Activated CD4-positive, alpha-beta memory T cell treated with anti-CD3 and anti-CD28 coated beads for 36 hours (primary cell): ENCODE measurements at regions of chr4 and their contacts with region 1.

Region 1: DNA sequence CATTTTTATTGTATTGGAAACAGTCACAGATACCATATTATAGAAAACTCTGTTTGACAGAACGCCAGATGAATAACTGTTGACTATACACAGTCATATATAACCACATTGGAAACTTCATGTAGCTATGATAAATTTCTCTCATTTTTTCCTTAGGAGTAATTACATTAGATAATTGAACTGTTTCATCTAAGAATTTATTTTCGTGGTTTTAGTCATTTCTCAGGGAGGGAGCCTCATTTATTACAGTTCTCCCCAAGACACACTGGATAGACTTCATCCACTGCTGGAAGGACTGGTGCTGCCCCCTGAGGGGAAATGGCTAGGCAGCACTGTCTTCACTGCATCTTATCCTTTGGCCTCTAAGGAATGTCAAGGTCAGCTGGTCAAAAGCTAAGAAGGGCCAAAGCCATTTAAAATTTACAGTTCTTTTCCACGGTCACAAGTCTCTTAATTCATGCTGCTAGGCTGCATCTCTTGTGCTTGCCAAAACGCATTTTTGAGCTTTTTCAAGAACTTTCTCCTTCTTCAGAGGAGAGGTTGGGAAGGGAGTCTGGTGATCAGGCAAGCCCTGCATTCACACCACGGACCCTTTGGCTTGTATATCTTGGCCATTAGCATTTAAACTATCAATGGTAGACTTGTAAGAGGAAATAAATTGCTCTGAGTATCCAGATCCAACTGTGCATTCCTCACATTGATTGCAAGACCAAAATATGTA is 145.1 kb downstream of the CBR4 start:
- DNase-seq: no peak
- H3K4me3 Mint-ChIP-seq: no peak overlapping the region
- H3K27ac Mint-ChIP-seq: peak overlapping the region; percentile 80
- H3K4me1 Mint-ChIP-seq: peaks cover 43% of the 10 kb centered on the region
- H3K27me3 Mint-ChIP-seq: peaks cover 14% of the 10 kb centered on the region

Region 2: DNA sequence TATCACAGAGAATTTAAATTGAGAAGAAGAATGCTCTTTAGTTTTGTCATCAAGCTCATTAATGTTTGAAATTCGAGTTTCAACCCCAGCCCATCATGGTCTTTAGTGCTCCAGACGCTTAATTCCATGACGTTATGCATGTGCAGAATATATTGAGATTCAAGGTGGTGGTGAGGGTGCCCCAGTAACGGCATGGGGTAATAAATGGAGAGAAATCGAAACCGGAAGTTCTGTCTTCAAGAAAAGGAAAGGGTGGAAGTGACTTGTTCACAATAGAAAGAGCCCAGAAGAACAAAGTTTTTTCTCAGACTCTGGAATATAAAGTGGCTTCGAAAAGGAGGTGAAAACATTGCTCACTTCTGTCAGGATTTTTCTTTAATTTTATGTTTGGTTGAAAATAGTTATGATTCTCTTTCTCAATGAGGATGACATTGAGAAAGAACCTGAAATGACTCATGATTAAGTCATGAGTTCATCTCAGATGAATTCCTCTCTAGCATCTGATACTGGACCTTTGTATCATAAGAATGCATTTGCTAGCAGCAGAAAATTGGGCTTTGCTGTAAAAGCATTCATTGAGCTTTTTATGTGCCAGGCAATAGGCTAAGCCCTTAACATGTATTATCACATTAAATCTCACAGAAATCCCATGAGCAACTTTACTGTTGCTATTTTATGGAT is 383.9 kb before region 1 on chr4:
- CTCF ChIA-PET with region 1: no interaction called
- POLR2A ChIA-PET with region 1: no interaction called
- intact Hi-C with region 1: loop called (anchors 10 kb)
- DNase-seq: peak; percentile 53
- H3K4me3 Mint-ChIP-seq: peak overlapping the region; percentile 85
- H3K27ac Mint-ChIP-seq: peak overlapping the region; percentile 88
- H3K4me1 Mint-ChIP-seq: peaks cover 51% of the 10 kb centered on the region
- H3K27me3 Mint-ChIP-seq: no peaks in the 10 kb centered on the region

Region 3: DNA sequence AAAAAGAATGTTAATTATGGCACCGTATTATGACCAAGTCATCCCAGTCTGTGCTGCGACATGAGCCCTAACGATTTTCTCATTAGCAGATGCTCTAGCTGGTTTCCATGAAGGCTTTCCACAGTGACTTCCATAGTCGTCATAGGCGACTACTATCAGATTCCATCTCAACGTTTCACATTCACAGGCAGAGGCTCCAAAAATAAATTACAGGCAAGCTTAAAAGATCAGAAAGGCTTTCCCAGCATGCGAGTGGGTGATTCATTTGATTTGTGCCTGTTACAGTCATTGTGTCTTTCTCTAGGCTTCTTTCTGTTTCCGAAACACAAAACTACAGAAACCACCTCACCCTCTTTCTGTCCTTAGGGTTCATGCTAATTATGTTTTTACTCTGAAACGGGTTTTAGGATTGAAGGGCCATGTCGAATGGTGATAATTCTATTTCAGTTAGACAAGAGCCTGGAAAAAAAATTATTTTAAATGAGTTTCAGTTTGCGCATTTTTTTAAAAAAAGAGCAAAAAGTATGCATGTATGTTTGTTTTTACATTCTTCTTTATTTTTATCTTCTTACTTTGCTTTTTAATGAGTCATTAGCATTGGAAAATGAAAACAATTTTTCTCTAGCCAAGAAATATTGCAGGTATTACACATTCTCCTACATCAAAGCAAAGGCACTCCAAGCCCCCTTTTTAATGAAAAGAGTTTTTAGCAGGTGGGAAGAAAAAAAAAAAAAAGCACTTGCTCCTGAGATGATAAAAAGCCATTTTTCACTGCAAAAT is 324.7 kb before region 1 on chr4:
- CTCF ChIA-PET with region 1: no interaction called
- POLR2A ChIA-PET with region 1: no interaction called
- intact Hi-C with region 1: loop called (anchors 1 kb)
- DNase-seq: peak; percentile 30
- H3K4me3 Mint-ChIP-seq: no peak overlapping the region
- H3K27ac Mint-ChIP-seq: peak overlapping the region; percentile 26
- H3K4me1 Mint-ChIP-seq: peaks cover 6% of the 10 kb centered on the region
- H3K27me3 Mint-ChIP-seq: peaks cover 2% of the 10 kb centered on the region

Region 4: GRCh38 chr4:168604496-168605373 is 260.2 kb before region 1 on chr4:
- CTCF ChIA-PET with region 1: no interaction called
- POLR2A ChIA-PET with region 1: no interaction called
- intact Hi-C with region 1: no loop called
- DNase-seq: no peak
- H3K4me3 Mint-ChIP-seq: no peak overlapping the region
- H3K27ac Mint-ChIP-seq: no peak overlapping the region
- H3K4me1 Mint-ChIP-seq: no peaks in the 10 kb centered on the region
- H3K27me3 Mint-ChIP-seq: no peaks in the 10 kb centered on the region

Region 5: DNA sequence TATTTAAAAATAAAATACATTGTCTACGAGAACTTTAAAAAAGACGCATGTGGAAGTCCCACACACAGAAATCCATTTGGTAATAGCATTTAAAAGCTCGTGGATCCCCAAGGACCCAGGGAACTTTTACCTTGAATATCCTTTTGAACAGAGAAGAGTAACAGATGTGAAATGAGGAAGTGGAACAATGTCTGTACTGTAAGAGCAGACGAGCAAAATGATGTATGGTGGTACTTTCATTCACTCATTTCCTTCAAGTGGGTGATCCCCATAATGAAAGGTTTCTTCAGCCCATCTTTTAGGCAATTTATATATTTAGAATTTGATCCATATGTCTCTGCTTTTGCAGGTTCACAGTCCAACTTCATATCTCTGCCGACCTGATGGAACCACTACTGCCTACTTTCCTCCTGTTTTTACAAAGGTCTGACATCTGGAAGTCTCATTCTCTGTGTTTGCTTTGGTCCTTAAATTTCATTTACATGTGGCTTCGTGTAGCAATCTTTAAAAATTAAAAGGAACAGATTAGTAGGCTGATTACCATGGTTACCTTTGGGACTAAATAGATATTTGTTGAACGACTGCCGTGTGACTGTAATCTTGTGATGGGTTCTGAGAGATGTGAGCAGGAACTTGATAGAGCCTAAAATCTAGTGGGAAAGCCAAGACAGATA is 179.7 kb before region 1 on chr4:
- CTCF ChIA-PET with region 1: no interaction called
- POLR2A ChIA-PET with region 1: no interaction called
- intact Hi-C with region 1: no loop called
- DNase-seq: no peak
- H3K4me3 Mint-ChIP-seq: no peak overlapping the region
- H3K27ac Mint-ChIP-seq: no peak overlapping the region
- H3K4me1 Mint-ChIP-seq: no peaks in the 10 kb centered on the region
- H3K27me3 Mint-ChIP-seq: peaks cover 4% of the 10 kb centered on the region

Region 6: GRCh38 chr4:168723020-168723419 is 142.0 kb before region 1 on chr4:
- CTCF ChIA-PET with region 1: no interaction called
- POLR2A ChIA-PET with region 1: interaction called, 3 read pairs
- intact Hi-C with region 1: loop called (anchors 1 kb)
- DNase-seq: no peak
- H3K4me3 Mint-ChIP-seq: no peak overlapping the region
- H3K27ac Mint-ChIP-seq: no peak overlapping the region
- H3K4me1 Mint-ChIP-seq: peaks cover 11% of the 10 kb centered on the region
- H3K27me3 Mint-ChIP-seq: peaks cover 8% of the 10 kb centered on the region

Region 7: GRCh38 chr4:168831919-168832762 is 32.8 kb before region 1 on chr4:
- CTCF ChIA-PET with region 1: no interaction called
- POLR2A ChIA-PET with region 1: interaction called, 5 read pairs
- intact Hi-C with region 1: loop called (anchors 2 kb)
- DNase-seq: peak; percentile 75
- H3K4me3 Mint-ChIP-seq: peak overlapping the region; percentile 74
- H3K27ac Mint-ChIP-seq: peak overlapping the region; percentile 33
- H3K4me1 Mint-ChIP-seq: peaks cover 19% of the 10 kb centered on the region
- H3K27me3 Mint-ChIP-seq: peaks cover 47% of the 10 kb centered on the region

Region 8: GRCh38 chr4:168877511-168878491 is 12.8 kb after region 1 on chr4:
- CTCF ChIA-PET with region 1: no interaction called
- POLR2A ChIA-PET with region 1: interaction called, 7 read pairs
- intact Hi-C with region 1: loop called (anchors 1 kb)
- DNase-seq: peak; percentile 35
- H3K4me3 Mint-ChIP-seq: peak overlapping the region; percentile 71
- H3K27ac Mint-ChIP-seq: no peak overlapping the region
- H3K4me1 Mint-ChIP-seq: peaks cover 15% of the 10 kb centered on the region
- H3K27me3 Mint-ChIP-seq: peaks cover 66% of the 10 kb centered on the region

Region 9: GRCh38 chr4:169179609-169180521 is 314.9 kb after region 1 on chr4:
- CTCF ChIA-PET with region 1: no interaction called
- POLR2A ChIA-PET with region 1: no interaction called
- intact Hi-C with region 1: no loop called
- DNase-seq: no peak
- H3K4me3 Mint-ChIP-seq: no peak overlapping the region
- H3K27ac Mint-ChIP-seq: no peak overlapping the region
- H3K4me1 Mint-ChIP-seq: no peaks in the 10 kb centered on the region
- H3K27me3 Mint-ChIP-seq: peaks cover 8% of the 10 kb centered on the region